Mucosa of descending colon (tissue), 3 donors: ENCODE measurements at regions of chr3 and their contacts with region 1.

Region 1: GRCh38 chr3:159130108-159130507 is 328.3 kb downstream of the MFSD1 start:
- DNase-seq: peak in 1 of 3 donors; percentile 72
- ATAC-seq: peak; percentile 48
- H3K4me3 ChIP-seq: no peak overlapping the region
- H3K4me1 ChIP-seq: no peaks in the 10 kb centered on the region
- CTCF ChIP-seq: no peak

Region 2: DNA sequence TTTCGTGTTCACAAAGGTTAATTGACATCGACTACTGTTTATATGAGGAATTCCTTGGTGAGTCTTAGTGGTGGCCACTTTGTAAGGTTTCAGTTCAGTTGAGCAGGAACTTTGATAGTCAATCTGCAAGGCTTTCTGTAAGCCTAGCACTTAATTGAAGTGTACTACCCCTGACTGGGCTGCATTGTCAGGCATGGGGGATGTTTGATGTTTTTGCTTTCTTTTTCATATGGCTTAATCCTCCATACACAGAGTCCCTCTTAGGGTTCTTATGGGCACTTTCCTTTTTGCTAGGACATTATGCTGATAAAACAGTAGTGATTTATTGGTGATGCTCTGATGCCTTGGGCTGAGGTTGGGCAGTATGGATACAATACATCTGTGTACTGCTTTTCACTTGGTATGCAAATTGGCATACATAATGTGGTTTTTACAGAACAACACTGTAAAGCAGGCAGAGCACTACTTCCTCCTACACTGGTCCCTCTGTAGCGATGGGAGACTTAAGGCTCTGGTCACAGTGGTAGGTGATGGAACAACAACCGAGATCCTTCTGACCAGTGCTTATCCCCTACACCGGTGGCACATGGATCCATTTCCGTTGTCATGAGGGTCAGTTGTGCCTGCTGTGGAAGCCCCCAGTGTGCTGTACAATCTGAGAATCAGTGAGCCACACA is 67.2 kb before region 1 on chr3:
- intact Hi-C with region 1: no loop called
- DNase-seq: no peak
- ATAC-seq: no peak
- H3K4me3 ChIP-seq: no peak overlapping the region
- H3K4me1 ChIP-seq: no peaks in the 10 kb centered on the region
- CTCF ChIP-seq: no peak

Region 3: DNA sequence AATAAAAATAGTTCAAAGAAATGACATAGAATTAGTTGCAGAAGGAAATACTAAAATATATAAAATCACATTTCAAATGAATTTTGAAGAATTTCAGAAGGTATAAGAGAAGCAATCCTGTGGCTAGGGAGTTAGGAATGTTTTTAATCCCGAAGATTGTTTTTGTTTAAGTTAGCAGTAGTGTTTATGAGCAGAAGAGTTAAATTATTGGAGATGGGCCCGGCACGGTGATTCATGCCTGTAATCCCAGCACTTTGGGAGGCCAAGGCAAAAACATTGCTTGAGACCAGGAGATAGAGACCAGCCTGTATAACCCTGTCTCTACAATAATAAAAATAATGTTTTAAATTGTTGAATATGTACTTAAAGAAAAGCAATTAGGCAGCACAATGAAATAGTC is 104.2 kb after region 1 on chr3:
- intact Hi-C with region 1: loop called in 1 of 2 experiments (anchors 10 kb)
- DNase-seq: peak in 1 of 3 donors; percentile 3
- ATAC-seq: no peak
- H3K4me3 ChIP-seq: no peak overlapping the region
- H3K4me1 ChIP-seq: no peaks in the 10 kb centered on the region
- CTCF ChIP-seq: no peak